ENCODE measurements at regions of chr7 and their contacts with region 1.

Region 1: GRCh38 chr7:128209229-128210035 is 31.6 kb upstream of the LEP start:
- DNase-seq: peak; percentile 55 to 64
- H3K4me3 ChIP-seq: no peak overlapping the region
- H3K27ac ChIP-seq: no peak overlapping the region
- H3K4me1 ChIP-seq: no peaks in the 10 kb centered on the region
- H3K27me3 ChIP-seq: no peaks in the 10 kb centered on the region
- CTCF ChIP-seq: peak; percentile 95 to 99 (median 97)
- POLR2A ChIP-seq: no peak

Region 2: DNA sequence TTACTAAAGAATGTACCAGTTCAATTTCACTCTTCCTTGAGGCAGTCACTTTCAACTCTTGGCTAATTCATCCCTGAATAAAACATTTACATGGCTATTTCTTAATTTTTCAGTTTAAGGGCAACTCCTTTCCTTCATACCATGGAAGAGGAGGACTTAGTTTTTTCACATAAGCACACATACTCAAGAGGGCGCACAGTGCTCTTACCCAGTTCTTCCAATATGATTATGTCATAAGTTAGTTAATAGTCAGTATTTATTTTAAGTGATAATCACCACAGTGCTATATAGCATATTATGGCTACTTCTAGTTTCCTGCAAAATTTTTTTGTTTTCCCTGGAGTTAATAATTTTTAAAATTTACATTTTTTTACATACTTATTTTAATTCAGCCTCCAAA is 498.8 kb before region 1 on chr7:
- intact Hi-C with region 1: loop called (anchors 2 kb)
- DNase-seq: no peak
- H3K4me3 ChIP-seq: no peak overlapping the region
- H3K27ac ChIP-seq: no peak overlapping the region
- H3K4me1 ChIP-seq: peaks cover 0 to 5% of the 10 kb centered on the region in 2 donors
- H3K27me3 ChIP-seq: no peaks in the 10 kb centered on the region
- CTCF ChIP-seq: no peak
- POLR2A ChIP-seq: no peak

Region 3: GRCh38 chr7:128135515-128136214 is 73.8 kb before region 1 on chr7:
- intact Hi-C with region 1: loop called (anchors 5 kb)
- DNase-seq: peak; percentile 32 to 38
- H3K4me3 ChIP-seq: peak overlapping the region; percentile 11 to 48 (median 20)
- H3K27ac ChIP-seq: no peak overlapping the region
- H3K4me1 ChIP-seq: peaks cover 10 to 15% of the 10 kb centered on the region in 2 donors
- H3K27me3 ChIP-seq: no peaks in the 10 kb centered on the region
- CTCF ChIP-seq: peak in 5 of 6 experiments; percentile 46 to 100 (median 88)
- POLR2A ChIP-seq: no peak

Region 4: DNA sequence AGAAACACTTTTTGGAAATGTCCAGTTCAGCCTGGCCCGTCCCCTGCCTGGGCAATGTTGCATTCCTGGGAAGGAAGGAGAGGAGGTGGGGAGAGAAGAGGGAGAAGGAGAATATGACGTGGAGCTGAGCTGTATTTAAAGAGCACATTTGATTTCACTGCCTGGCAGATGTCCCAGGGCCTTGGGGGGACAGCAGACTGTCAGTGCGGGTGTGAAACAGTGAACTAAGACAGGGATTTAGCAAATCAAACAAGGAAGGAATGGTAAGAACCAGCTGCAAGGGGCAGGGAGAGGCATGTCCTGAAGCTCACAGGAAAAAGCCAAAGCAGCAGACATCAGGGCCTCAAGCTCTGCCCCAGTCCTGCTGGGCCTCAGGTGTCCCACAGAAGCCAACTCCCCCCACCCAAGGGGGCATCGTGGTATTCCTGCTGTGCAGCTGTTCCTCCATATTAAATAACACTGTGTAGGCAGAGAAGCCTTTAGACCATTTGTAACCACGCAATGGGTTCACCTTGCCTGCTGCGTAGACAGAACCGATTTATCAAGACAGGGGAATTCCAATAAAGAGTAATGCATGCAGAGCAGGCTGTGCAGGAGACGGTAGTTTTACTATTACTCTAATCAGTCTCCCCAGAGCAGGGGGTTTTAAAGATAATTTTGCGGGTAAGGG is 49.8 kb after region 1 on chr7:
- intact Hi-C with region 1: no loop called
- DNase-seq: no peak
- H3K4me3 ChIP-seq: no peak overlapping the region
- H3K27ac ChIP-seq: peak overlapping the region in 1 of 3 donors; percentile 61
- H3K4me1 ChIP-seq: peaks cover 12 to 16% of the 10 kb centered on the region in 2 donors
- H3K27me3 ChIP-seq: no peaks in the 10 kb centered on the region
- CTCF ChIP-seq: no peak
- POLR2A ChIP-seq: no peak

Region 5: GRCh38 chr7:128270826-128271272 is 61.4 kb after region 1 on chr7:
- intact Hi-C with region 1: no loop called
- DNase-seq: no peak
- H3K4me3 ChIP-seq: no peak overlapping the region
- H3K27ac ChIP-seq: no peak overlapping the region
- H3K4me1 ChIP-seq: peaks cover 10 to 27% of the 10 kb centered on the region in 2 donors
- H3K27me3 ChIP-seq: peaks cover 4% of the 10 kb centered on the region
- CTCF ChIP-seq: no peak
- POLR2A ChIP-seq: no peak